ENCODE measurements at regions of chr22 and their contacts with region 1.

Region 1: GRCh38 chr22:30326706-30327362 is at the start of gene TBC1D10A:
- DNase-seq: peak; percentile 86 to 97 (median 94)
- ATAC-seq: peak; percentile 92
- H3K4me3 ChIP-seq: peak within 1 kb of the TSS; percentile 52 to 72
- H3K4me3 Mint-ChIP-seq: peak within 1 kb of the TSS; percentile 93
- H3K27ac ChIP-seq: peak within 1 kb of the TSS; percentile 68 to 86
- H3K27ac Mint-ChIP-seq: peak within 1 kb of the TSS; percentile 91
- H3K4me1 ChIP-seq: peaks cover 47% of the 10 kb centered on the region
- H3K4me1 Mint-ChIP-seq: peaks cover 45% of the 10 kb centered on the region
- H3K27me3 ChIP-seq: no peaks in the 10 kb centered on the region
- H3K27me3 Mint-ChIP-seq: no peaks in the 10 kb centered on the region
- CTCF ChIP-seq: no peak
- total RNA-seq, gene TBC1D10A: 77.5 to 87.3 TPM

Region 2: DNA sequence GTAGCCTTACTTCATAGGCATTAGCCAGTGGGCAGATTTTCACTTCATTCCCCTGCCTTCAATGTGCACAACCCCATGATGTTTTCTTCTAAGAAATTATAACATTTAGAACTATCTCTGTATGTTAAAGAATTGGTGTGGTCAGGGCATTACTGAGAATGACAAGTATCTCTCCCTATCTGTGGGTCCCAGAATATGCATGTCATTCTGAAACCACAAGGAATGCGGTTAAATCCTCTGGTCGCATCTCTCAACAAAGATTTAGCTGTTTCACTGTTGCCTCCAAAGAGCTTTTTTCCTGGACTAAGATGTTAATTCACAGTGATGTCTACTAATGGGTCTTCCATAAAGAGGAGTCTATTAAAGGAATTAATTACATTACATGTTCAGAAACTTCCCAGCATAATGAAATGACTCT is 143.0 kb before region 1 on chr22:
- CTCF ChIA-PET with region 1: no interaction called
- POLR2A ChIA-PET with region 1: no interaction called
- intact Hi-C with region 1: no loop called
- DNase-seq: no peak
- ATAC-seq: no peak
- H3K4me3 ChIP-seq: no peak overlapping the region
- H3K4me3 Mint-ChIP-seq: no peak overlapping the region
- H3K27ac ChIP-seq: no peak overlapping the region
- H3K27ac Mint-ChIP-seq: no peak overlapping the region
- H3K4me1 ChIP-seq: peaks cover 8% of the 10 kb centered on the region
- H3K4me1 Mint-ChIP-seq: peaks cover 18% of the 10 kb centered on the region
- H3K27me3 ChIP-seq: no peaks in the 10 kb centered on the region
- H3K27me3 Mint-ChIP-seq: no peaks in the 10 kb centered on the region
- CTCF ChIP-seq: no peak

Region 3: DNA sequence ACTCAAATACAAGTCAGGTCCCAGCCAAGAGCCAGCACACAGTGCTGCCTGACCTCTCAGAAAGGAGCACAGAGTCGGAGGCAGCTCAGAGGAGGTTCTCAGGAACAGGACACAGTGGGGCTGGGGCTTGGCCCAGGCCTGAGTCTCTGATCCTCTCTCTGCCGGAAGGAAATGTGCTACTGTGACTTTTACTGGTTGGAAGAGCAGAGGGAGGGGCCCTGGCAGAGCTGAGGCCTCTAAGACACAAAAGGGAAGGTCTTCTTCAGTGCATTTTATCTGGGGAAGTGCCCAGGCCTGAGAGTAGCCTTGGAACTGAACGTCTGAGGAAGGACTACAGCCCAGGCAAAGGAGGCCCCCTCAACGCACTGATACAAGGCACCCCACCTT is 21.3 kb before region 1 on chr22:
- CTCF ChIA-PET with region 1: interaction called, 12 read pairs
- POLR2A ChIA-PET with region 1: interaction called, 184 read pairs
- intact Hi-C with region 1: loop called (anchors 1 kb)
- DNase-seq: peak in 8 of 9 experiments; percentile 43 to 80 (median 56)
- ATAC-seq: peak; percentile 50
- H3K4me3 ChIP-seq: peak overlapping the region; percentile 36 to 38
- H3K4me3 Mint-ChIP-seq: peak overlapping the region; percentile 69
- H3K27ac ChIP-seq: peak overlapping the region; percentile 62 to 77
- H3K27ac Mint-ChIP-seq: peak overlapping the region; percentile 98
- H3K4me1 ChIP-seq: peaks cover 100% of the 10 kb centered on the region
- H3K4me1 Mint-ChIP-seq: peaks cover 97% of the 10 kb centered on the region
- H3K27me3 ChIP-seq: no peaks in the 10 kb centered on the region
- H3K27me3 Mint-ChIP-seq: no peaks in the 10 kb centered on the region
- CTCF ChIP-seq: no peak

Region 4: GRCh38 chr22:30310881-30311771 is 15.7 kb before region 1 on chr22:
- CTCF ChIA-PET with region 1: interaction called, 24 read pairs
- POLR2A ChIA-PET with region 1: interaction called, 184 read pairs
- intact Hi-C with region 1: loop called (anchors 1 kb)
- DNase-seq: no peak
- ATAC-seq: no peak
- H3K4me3 ChIP-seq: no peak overlapping the region
- H3K4me3 Mint-ChIP-seq: peak overlapping the region; percentile 63
- H3K27ac ChIP-seq: peak overlapping the region; percentile 53 to 77
- H3K27ac Mint-ChIP-seq: peak overlapping the region; percentile 98
- H3K4me1 ChIP-seq: peaks cover 98% of the 10 kb centered on the region
- H3K4me1 Mint-ChIP-seq: peaks cover 96% of the 10 kb centered on the region
- H3K27me3 ChIP-seq: no peaks in the 10 kb centered on the region
- H3K27me3 Mint-ChIP-seq: no peaks in the 10 kb centered on the region
- CTCF ChIP-seq: no peak

Region 5: DNA sequence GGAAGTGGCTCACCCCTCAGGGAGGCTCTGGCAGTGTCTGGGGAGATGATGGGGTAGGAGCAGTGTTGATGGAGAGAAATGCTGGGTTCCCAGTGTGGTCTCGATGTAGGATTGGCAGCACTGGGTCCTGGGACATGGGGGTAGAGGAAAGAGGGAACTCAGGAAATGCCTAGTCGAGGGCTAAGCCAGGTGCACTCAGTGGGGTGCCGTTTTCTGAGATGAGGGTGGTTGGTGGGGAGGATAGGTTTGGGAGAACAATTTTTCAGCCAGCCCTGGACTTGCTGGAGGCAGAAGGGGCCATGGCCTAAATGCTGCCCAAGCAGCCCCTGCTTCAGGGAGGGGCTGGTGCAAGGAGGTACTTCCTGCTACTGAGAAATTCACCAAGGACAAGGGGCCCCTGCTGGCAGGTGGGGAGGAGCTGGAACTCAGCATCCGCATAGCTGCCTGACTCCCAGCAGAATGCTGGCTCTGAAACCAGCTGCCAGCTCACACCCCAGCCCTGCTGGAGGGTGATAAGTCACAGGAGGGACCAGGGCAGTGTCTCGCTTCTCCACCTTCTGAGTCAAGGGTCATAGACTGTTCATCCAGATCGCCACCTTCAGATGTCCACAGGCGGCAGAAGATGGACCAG is 35.9 kb after region 1 on chr22:
- CTCF ChIA-PET with region 1: no interaction called
- POLR2A ChIA-PET with region 1: no interaction called
- intact Hi-C with region 1: no loop called
- DNase-seq: no peak
- ATAC-seq: no peak
- H3K4me3 ChIP-seq: no peak overlapping the region
- H3K4me3 Mint-ChIP-seq: no peak overlapping the region
- H3K27ac ChIP-seq: no peak overlapping the region
- H3K27ac Mint-ChIP-seq: no peak overlapping the region
- H3K4me1 ChIP-seq: no peaks in the 10 kb centered on the region
- H3K4me1 Mint-ChIP-seq: peaks cover 3% of the 10 kb centered on the region
- H3K27me3 ChIP-seq: no peaks in the 10 kb centered on the region
- H3K27me3 Mint-ChIP-seq: no peaks in the 10 kb centered on the region
- CTCF ChIP-seq: no peak

Region 6: DNA sequence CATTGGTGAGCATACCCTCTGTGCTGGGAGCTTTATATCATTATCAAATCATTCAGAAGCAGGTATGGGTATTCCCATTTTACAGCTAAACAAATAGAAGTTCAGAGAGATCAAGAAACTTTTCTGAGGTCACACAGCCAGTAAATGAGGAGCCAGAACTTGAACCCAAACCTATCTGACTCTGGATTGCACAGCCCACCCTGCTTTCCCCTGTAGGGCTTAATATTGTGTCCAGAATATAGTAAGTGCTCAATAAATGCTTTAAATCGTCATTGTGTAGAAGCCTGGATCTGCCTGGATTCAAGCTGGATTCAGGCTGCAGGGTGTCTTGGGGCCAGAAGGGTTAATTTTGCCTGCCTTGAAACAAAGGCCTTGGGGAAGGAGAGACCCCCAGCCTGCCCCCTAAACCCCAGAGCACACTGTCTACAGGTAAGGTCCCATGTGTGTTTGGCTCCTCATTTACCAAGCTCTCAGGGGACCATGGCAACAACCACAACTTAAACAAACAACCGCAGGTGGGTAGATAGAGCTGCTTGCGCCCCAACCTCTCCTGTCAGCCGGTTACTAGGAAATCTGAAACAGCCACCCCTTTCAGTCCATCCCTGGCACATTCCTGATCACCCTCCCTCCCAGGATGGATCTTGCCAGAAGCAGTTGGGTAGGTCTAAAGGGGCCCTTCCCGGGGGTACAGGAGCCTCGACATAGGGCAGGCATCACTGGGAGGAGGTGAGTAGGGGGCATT is 148.0 kb after region 1 on chr22:
- CTCF ChIA-PET with region 1: no interaction called
- POLR2A ChIA-PET with region 1: no interaction called
- intact Hi-C with region 1: no loop called
- DNase-seq: peak in 5 of 9 experiments; percentile 20 to 74 (median 57)
- ATAC-seq: peak; percentile 81
- H3K4me3 ChIP-seq: no peak overlapping the region
- H3K4me3 Mint-ChIP-seq: no peak overlapping the region
- H3K27ac ChIP-seq: no peak overlapping the region
- H3K27ac Mint-ChIP-seq: peak overlapping the region; percentile 37
- H3K4me1 ChIP-seq: no peaks in the 10 kb centered on the region
- H3K4me1 Mint-ChIP-seq: peaks cover 8% of the 10 kb centered on the region
- H3K27me3 ChIP-seq: no peaks in the 10 kb centered on the region
- H3K27me3 Mint-ChIP-seq: peaks cover 20% of the 10 kb centered on the region
- CTCF ChIP-seq: no peak

Measured in CD8-positive, alpha-beta T cell (primary cell).